ENCODE measurements at regions of chr4 and their contacts with region 1.

Region 1: GRCh38 chr4:139761461-139761860 is 95.8 kb downstream of the MGST2 start:
- DNase-seq: no peak

Region 2: DNA sequence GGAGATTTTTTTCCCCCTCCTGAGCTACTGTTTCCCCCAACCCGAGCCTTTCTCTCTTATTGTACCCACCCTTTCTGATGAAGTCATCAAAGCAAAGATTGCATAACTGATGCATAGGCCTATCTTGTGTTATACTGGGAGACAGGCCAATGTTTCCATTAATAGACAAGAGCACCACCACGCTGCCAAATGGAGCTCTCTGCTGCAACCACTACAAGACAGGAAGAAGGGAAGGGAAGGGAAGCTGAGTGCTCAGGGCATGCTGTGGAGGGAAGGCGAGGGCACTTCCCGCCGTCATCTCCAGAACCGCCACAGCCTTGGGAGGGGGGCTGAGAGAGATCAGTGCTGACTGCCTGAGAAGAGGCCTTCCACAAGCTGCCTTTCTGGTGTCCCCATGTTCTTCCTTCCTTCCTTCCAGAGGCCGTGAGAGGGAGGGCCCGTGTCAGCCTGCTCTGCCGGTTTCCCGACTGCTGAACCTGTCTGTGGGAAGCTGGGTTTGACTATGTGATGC is 20.9 kb before region 1 on chr4:
- intact Hi-C with region 1: loop called (anchors 1 kb)
- DNase-seq: no peak

Region 3: GRCh38 chr4:139791681-139792080 is 30.2 kb after region 1 on chr4:
- intact Hi-C with region 1: loop called (anchors 2 kb)
- DNase-seq: no peak

Region 4: DNA sequence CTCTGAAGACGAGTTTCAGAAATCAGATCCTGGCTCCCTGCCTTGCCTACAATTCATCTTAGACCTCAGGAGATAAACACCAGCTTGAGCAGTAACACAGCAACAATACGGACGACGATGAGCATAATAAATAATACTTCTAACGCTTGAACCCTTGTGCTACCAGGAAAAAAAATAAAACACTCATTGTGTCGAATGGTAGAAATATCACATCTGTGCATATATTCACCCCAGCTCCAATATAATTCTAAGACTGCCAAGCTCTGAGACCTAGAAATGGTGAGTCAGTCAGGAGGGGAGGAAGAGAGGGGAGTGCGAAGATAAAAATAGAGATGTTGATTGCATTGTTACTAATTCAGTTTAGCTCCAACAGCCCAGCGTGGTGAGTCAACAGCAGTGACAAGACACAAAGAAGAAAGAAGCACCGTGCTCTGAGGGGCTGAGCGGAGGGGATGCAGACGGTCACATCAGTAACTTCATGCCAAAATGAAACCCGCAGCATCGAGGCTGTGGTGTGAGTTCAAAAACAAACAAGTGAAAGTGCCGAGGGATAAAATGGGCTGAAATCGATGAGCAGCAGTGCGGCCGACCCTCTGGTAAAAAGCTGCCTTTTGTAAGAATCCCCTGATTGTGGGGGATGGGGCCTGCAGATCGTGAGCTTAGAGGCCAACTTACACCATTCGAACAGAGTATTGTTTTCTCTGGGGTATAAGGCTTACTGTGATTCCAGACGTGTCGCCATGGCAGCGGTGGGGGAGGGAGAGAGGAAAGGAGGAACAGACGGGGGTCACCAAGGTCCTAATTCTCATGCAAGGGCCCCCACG is 54.5 kb after region 1 on chr4:
- intact Hi-C with region 1: loop called (anchors 2 kb)
- DNase-seq: no peak

Region 5: GRCh38 chr4:139841464-139842246 is 80.2 kb after region 1 on chr4:
- intact Hi-C with region 1: no loop called
- DNase-seq: no peak

Region 6: GRCh38 chr4:139875411-139875825 is 114.0 kb after region 1 on chr4:
- intact Hi-C with region 1: loop called (anchors 5 kb)
- DNase-seq: no peak

Region 7: DNA sequence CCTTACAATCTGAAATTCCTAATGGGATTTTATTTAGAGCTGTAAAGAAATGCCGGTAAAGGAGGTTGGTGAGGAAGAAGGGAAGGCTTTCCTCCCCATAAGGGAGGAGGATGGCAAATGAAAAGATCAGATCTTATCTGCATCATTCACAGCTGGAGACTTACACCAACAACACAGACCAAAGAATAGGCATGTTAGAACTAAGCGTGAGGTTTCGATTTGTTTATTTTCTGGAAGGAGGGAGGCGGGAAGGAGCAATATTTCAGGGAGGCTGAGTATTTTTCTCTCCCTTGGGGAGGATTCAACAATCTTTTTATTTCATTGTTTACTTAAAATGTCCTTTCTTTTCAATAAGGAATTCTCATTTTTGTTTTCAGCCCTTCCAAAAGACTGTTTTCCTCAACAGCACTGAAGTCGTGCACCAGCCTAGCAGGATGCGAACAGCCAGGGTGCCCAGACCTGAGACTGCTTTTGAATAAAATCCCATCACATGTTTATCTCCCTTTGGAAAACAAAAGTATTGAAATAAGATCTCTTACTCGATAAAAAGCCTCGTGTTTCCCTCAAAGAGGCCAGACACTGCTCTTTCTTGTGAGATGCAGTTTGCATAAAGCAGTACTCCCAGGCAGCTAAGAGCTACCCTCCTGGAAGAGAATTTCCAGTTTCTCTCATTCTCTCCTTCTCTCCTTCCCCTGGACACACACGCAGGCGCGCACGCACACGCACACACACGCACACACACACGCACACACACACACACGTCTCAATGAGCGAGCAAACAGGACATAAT is 140.3 kb after region 1 on chr4:
- intact Hi-C with region 1: no loop called
- DNase-seq: no peak

Region 8: DNA sequence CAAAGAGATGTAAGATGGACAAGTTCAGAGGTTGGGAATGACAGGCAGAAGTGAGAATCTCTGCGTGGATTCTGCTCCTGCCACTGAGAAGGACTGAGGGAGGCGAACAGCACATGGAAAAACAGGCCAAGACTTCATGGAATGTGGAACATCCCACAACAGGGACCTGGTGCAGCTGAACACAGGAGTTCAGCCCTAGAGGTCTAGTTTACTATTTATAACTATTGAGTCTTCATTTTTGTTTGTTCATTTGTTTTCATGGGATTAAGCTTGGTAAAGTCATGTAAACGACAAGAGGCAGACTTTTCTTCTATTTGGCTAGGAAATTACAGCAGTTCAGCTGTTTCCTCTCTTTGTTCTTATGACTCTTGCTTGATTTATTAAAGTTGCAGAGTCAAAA is 158.1 kb after region 1 on chr4:
- intact Hi-C with region 1: loop called (anchors 5 kb)
- DNase-seq: no peak

Region 9: DNA sequence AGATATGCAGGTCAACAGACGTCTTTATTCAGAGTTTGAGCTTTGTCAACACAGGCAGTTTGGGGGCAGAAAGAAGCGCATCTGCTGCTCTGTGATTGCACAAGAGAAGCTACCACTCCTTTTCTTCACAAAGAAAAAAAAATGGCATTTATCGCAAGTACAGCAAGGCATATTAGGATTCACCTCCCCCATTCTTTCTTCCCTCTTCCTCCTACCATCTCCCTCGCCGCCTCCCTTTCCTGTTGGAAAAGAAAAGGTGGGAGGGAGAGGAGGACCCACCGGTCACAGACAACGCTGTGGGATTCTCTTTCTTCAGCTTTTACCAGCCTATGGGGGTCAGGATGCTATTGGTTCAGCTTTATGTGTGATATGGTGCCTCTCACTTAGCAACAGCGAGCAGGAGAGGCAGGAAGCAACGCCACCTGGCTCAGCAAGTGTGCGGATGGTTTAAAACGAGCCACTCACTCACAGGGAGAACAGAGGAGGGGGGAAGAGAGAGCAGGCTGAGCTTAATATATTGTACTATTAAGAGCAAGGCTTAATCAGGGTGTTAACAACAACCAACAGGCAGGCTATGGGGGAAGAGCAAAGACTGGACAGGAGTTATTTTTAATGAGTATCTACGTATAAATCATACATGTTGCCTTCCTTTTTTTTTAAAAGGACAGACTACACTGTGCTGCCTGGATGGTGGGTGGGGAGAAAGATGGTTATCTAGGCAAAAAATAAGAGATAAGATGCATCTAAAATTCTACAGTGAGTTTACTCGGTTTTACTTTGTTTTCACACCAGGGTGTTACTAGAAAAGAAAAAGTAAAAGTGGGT is 287.8 kb after region 1 on chr4:
- intact Hi-C with region 1: loop called (anchors 10 kb)
- DNase-seq: peak; percentile 79

Measured in cardiac septum (tissue), 1 donor.